ENCODE measurements at regions of chr6 and their contacts with region 1.

Region 1: DNA sequence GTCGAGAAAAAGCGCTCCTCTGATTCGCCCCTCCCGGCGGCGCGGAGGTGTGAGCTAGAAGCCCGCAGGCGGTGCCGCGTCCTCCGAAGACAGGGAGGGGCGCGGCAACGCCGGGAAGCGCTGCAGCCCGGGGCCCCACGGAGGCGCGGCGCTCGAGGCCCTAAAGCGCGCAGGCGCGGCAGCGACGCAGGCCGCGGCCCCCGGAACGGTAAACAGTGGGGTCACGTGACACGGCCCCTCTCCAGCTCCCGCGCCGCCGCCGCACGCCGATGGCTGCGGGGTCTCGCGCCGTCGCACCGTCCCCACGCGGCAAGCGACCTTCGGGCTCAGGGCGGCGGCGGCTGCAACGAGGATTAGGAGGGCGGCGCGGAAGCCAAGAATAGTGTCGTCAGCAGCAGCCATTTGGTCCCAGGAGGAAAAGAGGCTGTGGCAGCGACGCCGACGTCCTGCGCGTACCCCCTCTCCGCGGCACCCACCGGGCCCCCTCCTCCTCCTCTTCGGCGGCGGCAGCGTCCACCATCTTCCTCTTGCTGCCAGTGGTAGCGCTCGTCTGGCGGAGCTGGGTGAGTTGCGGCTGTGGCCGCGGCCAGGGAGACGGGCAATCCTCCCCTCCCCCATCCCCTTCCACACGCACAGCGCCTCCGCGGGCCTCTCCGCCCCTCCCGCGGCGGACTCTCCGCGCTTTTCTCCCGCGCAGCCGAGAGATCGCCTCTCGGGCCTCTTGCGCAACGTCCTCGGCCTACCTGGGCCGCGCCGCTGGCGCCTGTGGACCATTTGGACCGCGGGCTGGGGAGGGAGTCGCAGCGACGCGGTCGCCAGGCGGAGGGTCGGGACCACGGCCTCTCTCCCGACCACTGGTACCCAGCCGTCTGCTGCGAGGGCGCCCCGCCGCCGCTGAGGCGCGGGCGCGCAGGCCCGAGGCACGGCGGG is at the start of gene PHF3:
- DNase-seq: peak; percentile 87
- H3K4me3 ChIP-seq: peak within 1 kb of the TSS; percentile 75 to 96 (median 92)
- H3K27ac ChIP-seq: peak within 1 kb of the TSS; percentile 83
- H3K4me1 ChIP-seq: peaks cover 14% of the 10 kb centered on the region
- H3K27me3 ChIP-seq: peaks cover 6 to 12% of the 10 kb centered on the region in 2 experiments
- CTCF ChIP-seq: peak in 1 of 2 donors; percentile 3
- POLR2A ChIP-seq: peak; percentile 60
- total RNA-seq, gene PHF3: 29.6 and 29.9 TPM in 2 replicates

Region 2: GRCh38 chr6:62174548-62174947 is 1461.3 kb before region 1 on chr6:
- CTCF ChIA-PET with region 1: no interaction called
- POLR2A ChIA-PET with region 1: no interaction called
- dilution Hi-C with region 1: no loop called
- intact Hi-C with region 1: no loop called
- DNase-seq: no peak
- H3K4me3 ChIP-seq: no peak overlapping the region
- H3K27ac ChIP-seq: no peak overlapping the region
- H3K4me1 ChIP-seq: no peaks in the 10 kb centered on the region
- H3K27me3 ChIP-seq: no peaks in the 10 kb centered on the region
- CTCF ChIP-seq: no peak
- POLR2A ChIP-seq: no peak

Region 3: GRCh38 chr6:63571881-63572732 is 63.7 kb before region 1 on chr6 and contains the starts of genes LOC128125822 and PTP4A1:
- CTCF ChIA-PET with region 1: no interaction called
- POLR2A ChIA-PET with region 1: interaction called, 3 read pairs
- dilution Hi-C with region 1: no loop called
- intact Hi-C with region 1: loop called (anchors 1 kb)
- DNase-seq: peak; percentile 97
- H3K4me3 ChIP-seq: peak within 1 kb of the TSS; percentile 13 to 96 (median 88)
- H3K27ac ChIP-seq: peak within 1 kb of the TSS; percentile 61
- H3K4me1 ChIP-seq: peaks cover 18% of the 10 kb centered on the region
- H3K27me3 ChIP-seq: peaks cover 8 to 10% of the 10 kb centered on the region in 2 experiments
- CTCF ChIP-seq: no peak
- POLR2A ChIP-seq: peak; percentile 87
- total RNA-seq, gene PTP4A1: 58.4 and 65.1 TPM in 2 replicates

Region 4: DNA sequence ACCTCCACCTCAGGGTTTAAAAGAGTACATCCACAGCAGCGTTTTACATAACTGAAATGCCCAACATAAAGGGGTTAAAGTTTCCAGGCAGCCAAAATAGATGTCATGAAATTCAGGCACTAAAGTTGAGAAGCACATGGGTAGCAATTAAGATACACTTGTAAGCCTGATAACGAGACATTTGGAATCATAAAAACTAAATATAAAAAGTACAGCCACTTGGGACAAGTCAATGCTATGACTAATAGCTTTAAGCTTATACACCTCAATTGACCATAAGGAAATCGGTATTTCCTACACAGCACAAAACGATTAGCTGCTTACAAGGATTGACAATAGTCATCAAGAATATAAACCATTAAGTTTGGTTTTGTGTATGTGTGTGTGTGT is 51.7 kb before region 1 on chr6:
- CTCF ChIA-PET with region 1: no interaction called
- POLR2A ChIA-PET with region 1: no interaction called
- dilution Hi-C with region 1: no loop called
- intact Hi-C with region 1: loop called (anchors 1 kb)
- DNase-seq: no peak
- H3K4me3 ChIP-seq: no peak overlapping the region
- H3K27ac ChIP-seq: no peak overlapping the region
- H3K4me1 ChIP-seq: no peaks in the 10 kb centered on the region
- H3K27me3 ChIP-seq: no peaks in the 10 kb centered on the region
- CTCF ChIP-seq: no peak
- POLR2A ChIP-seq: peak; percentile 38

Region 5: DNA sequence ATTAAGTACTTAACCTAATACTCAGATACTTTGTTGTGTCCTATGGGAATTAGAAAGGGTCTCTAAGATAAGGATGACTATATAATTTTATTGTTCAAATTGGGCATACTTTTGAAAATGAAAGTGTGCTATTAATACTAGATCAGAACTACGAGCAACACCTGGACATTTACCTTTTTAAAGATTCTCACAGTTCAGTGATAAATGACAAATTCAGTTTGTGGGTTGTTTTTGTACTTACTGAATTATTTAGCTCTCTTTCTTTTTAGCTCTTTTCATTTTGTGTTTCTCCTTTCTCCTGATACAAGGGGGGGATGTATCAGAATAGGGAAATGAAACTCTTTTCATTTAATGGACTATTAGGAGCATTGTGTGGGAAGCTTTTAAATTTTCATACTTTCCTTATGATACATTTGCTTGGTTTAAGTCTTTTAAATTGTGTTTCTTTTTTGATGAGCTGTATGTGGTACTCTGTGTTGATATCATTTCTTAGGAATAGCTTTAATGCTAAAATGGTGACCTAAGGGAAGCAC is 47.3 kb after region 1 on chr6:
- CTCF ChIA-PET with region 1: no interaction called
- POLR2A ChIA-PET with region 1: no interaction called
- dilution Hi-C with region 1: no loop called
- intact Hi-C with region 1: loop called (anchors 5 kb)
- DNase-seq: no peak
- H3K4me3 ChIP-seq: no peak overlapping the region
- H3K27ac ChIP-seq: no peak overlapping the region
- H3K4me1 ChIP-seq: no peaks in the 10 kb centered on the region
- H3K27me3 ChIP-seq: no peaks in the 10 kb centered on the region
- CTCF ChIP-seq: no peak
- POLR2A ChIP-seq: no peak

Region 6: DNA sequence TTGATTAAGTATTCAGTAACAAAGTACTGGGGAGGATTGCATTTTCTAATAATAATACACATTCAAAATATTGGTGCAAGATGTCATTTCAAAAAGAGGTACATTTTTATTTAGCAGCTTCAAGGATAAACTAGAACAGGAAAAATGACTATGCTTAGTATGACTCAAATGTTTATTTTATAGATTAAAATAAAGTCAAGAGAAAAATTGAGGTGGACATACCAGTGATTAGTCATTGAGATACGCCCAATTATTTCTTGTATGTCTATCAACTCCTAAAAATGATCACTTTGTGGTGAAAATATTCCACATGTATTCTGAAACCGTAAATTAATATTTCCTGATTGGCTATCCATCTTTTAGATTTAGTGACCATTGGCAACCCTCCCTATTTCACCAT is 96.5 kb after region 1 on chr6:
- CTCF ChIA-PET with region 1: interaction called, 4 read pairs
- POLR2A ChIA-PET with region 1: no interaction called
- dilution Hi-C with region 1: no loop called
- intact Hi-C with region 1: loop called (anchors 5 kb)
- DNase-seq: no peak
- H3K4me3 ChIP-seq: no peak overlapping the region
- H3K27ac ChIP-seq: peak overlapping the region; percentile 28
- H3K4me1 ChIP-seq: peaks cover 20% of the 10 kb centered on the region
- H3K27me3 ChIP-seq: no peaks in the 10 kb centered on the region
- CTCF ChIP-seq: no peak
- POLR2A ChIP-seq: no peak